Activated CD4-positive, alpha-beta T cell treated with anti-CD3 and anti-CD28 coated beads for 36 hours (primary cell): ENCODE measurements at regions of chr16 and their contacts with region 1.

Region 1: DNA sequence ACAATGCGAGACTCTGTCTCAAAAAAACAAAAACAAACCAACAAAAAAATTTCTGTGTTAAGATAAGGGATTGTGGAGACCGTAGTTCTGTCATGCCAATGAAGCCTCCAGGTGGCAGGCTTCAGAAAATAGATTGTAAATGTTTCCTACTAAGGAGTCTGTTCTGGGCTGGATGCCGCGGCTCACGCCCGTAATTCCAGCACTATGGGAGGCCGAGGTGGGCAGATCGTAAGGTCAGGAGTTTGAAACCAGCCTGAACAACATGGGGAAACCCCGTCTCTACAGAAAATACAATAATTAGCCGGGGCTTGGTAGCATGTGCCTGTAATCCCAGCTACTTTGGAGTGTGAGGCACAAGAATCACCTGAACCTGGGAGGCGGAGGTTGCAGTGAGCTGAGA is 4.4 kb upstream of the SNX29 start:
- DNase-seq: no peak
- ATAC-seq: no peak
- H3K4me3 Mint-ChIP-seq: no peak overlapping the region
- H3K27ac Mint-ChIP-seq: no peak overlapping the region
- H3K4me1 Mint-ChIP-seq: peaks cover 14% of the 10 kb centered on the region
- H3K27me3 Mint-ChIP-seq: no peaks in the 10 kb centered on the region

Region 2: GRCh38 chr16:12062343-12063005 is 90.3 kb after region 1 on chr16:
- CTCF ChIA-PET with region 1: interaction called, 5 read pairs
- POLR2A ChIA-PET with region 1: no interaction called
- intact Hi-C with region 1: loop called (anchors 5 kb)
- DNase-seq: no peak
- ATAC-seq: peak; percentile 49
- H3K4me3 Mint-ChIP-seq: no peak overlapping the region
- H3K27ac Mint-ChIP-seq: no peak overlapping the region
- H3K4me1 Mint-ChIP-seq: peaks cover 18% of the 10 kb centered on the region
- H3K27me3 Mint-ChIP-seq: no peaks in the 10 kb centered on the region

Region 3: DNA sequence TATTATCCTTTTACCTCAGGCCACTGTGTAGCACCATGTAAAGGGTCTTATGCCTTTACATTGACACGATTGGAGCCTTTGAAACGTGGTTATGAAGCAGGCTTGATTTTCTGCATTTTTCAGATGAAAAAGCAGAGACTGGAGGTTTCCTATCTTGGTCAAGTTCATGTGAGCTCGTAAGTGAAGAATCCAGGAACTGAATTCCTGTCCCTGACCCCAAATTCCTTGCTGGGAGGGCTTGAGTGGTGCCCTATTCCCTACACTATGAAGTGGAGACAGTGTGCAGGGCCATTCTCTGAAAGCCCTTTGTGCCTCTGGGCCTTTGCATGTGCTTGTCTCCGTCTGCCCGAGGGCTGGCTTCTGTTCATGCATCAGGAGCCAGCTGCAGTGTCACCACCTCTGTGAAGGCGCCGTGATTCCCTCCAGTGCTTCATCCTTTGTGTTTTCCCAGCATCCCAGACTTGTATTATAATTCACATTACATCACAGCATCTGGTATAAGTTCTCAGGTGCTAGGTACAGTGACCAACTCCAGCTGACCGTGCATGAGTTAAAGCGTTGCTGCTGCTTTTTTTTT is 185.5 kb after region 1 on chr16:
- CTCF ChIA-PET with region 1: no interaction called
- POLR2A ChIA-PET with region 1: no interaction called
- intact Hi-C with region 1: no loop called
- DNase-seq: no peak
- ATAC-seq: no peak
- H3K4me3 Mint-ChIP-seq: no peak overlapping the region
- H3K27ac Mint-ChIP-seq: no peak overlapping the region
- H3K4me1 Mint-ChIP-seq: peaks cover 10% of the 10 kb centered on the region
- H3K27me3 Mint-ChIP-seq: no peaks in the 10 kb centered on the region